ENCODE measurements at regions of chr22 and their contacts with region 1.

Region 1: GRCh38 chr22:35914665-35915476 is 113.8 kb downstream of the RBFOX2 start:
- DNase-seq: peak in 8 of 10 donors; percentile 56 to 85 (median 62)
- H3K4me3 ChIP-seq: peak overlapping the region; percentile 40 to 79 (median 63)
- H3K27ac ChIP-seq: peak overlapping the region; percentile 56 to 96 (median 89)
- H3K27me3 ChIP-seq: no peaks in the 10 kb centered on the region
- CTCF ChIP-seq: peak in 8 of 56 donors; percentile 7 to 33 (median 17)

Region 2: GRCh38 chr22:35627264-35628041 is 287.4 kb before region 1 on chr22:
- intact Hi-C with region 1: loop called (anchors 5 to 10 kb)
- DNase-seq: peak in 9 of 10 donors; percentile 23 to 72 (median 59)
- H3K4me3 ChIP-seq: peak overlapping the region; percentile 16 to 71 (median 53)
- H3K27ac ChIP-seq: peak overlapping the region in 14 of 59 donors; percentile 11 to 72 (median 48)
- H3K27me3 ChIP-seq: peaks cover 0 to 6% (median 0%) of the 10 kb centered on the region in 45 donors
- CTCF ChIP-seq: peak in 53 of 56 donors; percentile 20 to 67 (median 45)

Region 3: DNA sequence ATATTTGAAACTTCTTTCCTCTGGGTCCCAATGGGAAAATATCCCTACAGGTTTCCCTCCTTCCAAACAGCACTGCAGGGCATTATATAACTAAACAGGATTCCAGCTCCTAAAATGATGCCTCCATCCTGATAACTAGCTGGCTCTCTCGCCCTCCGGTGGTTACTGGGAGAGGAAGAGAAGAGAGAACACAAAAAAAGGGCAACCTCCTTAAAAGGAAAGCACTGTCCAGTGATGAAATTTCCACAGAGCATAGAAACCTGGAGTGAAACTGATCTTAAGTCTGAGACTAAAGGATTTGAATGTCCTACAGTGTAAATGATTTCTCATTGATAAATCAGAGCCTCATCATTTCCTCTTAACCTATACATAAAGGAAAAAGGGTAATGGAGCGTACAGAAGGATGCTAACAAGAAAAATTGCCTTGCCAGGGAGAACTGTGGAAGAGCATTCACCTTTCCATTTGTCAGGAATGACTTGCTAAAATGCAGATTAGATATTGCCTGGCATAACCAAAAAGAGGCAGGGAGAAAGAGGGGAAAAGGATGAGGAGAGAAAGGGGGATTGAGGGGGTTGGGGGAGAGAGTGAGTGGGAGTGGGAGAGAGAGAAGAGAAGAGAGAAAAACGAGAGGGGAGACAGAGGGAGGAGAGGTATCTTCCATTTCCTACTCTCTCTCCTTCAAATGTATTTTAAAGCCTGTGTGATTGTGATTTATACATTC is 75.9 kb before region 1 on chr22:
- intact Hi-C with region 1: loop called in 1 of 2 experiments (anchors 5 kb)
- DNase-seq: peak in 3 of 10 donors; percentile 38 to 71 (median 41)
- H3K4me3 ChIP-seq: peak overlapping the region in 54 of 59 donors; percentile 2 to 64 (median 46)
- H3K27ac ChIP-seq: peak overlapping the region in 52 of 59 donors; percentile 10 to 87 (median 54)
- H3K27me3 ChIP-seq: no peaks in the 10 kb centered on the region
- CTCF ChIP-seq: peak in 40 of 56 donors; percentile 12 to 53 (median 33)

Region 4: DNA sequence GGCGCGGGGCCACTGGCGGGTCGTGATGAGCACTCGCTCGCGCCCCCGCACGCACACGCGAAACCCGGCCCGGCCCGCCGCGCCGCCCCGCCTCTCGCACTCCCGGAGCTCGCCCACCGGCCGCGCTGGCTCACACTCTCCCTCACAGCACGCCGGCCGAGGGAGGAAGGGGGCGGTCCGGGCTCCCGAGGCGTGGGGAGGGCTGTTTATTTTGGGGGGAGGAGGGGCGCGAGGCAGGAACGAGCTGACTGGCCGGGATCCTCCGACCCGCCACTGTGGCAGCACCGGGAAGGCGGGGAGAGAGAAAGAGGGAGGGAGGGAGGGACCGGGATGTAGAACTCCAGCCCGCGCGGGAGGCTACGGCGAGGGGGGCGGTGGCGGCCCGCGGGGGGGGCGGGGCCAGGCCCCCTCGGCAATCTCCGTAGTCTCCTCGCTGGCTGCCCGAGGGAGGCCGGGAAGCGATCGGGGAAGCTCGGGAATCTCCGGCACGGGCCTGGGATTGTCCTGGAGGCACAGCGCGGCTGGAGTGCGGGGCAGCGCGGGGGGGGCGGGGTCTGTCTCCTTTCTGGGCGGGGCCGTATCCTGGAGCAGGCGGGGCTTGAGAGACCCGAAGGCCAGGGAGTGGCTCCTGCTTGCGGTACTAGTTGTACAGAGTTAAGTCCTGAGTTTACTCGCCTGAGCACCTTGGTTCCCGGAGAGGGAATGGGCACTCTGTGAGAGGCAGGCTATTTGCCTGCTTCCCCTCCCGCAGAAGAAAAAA is 114.0 kb after region 1 on chr22 and contains the start of gene RBFOX2:
- intact Hi-C with region 1: loop called (anchors 1 to 10 kb)
- DNase-seq: peak; percentile 92 to 96 (median 94)
- H3K4me3 ChIP-seq: peak within 1 kb of the TSS; percentile 58 to 93 (median 80)
- H3K27ac ChIP-seq: peak within 1 kb of the TSS; percentile 3 to 93 (median 84)
- H3K27me3 ChIP-seq: no peaks in the 10 kb centered on the region
- CTCF ChIP-seq: peak in 20 of 56 donors; percentile 3 to 53 (median 24)
- total RNA-seq, gene RBFOX2: 65.0 to 238 (median 170) TPM

Region 5: GRCh38 chr22:36065775-36066559 is 151.1 kb after region 1 on chr22:
- intact Hi-C with region 1: loop called in 1 of 2 experiments (anchors 5 kb)
- DNase-seq: peak; percentile 80 to 89 (median 86)
- H3K4me3 ChIP-seq: peak overlapping the region; percentile 44 to 89 (median 62)
- H3K27ac ChIP-seq: peak overlapping the region; percentile 7 to 94 (median 83)
- H3K27me3 ChIP-seq: no peaks in the 10 kb centered on the region
- CTCF ChIP-seq: peak; percentile 94 to 100 (median 99)